ENCODE measurements at regions of chr7 and their contacts with region 1.

Region 1: DNA sequence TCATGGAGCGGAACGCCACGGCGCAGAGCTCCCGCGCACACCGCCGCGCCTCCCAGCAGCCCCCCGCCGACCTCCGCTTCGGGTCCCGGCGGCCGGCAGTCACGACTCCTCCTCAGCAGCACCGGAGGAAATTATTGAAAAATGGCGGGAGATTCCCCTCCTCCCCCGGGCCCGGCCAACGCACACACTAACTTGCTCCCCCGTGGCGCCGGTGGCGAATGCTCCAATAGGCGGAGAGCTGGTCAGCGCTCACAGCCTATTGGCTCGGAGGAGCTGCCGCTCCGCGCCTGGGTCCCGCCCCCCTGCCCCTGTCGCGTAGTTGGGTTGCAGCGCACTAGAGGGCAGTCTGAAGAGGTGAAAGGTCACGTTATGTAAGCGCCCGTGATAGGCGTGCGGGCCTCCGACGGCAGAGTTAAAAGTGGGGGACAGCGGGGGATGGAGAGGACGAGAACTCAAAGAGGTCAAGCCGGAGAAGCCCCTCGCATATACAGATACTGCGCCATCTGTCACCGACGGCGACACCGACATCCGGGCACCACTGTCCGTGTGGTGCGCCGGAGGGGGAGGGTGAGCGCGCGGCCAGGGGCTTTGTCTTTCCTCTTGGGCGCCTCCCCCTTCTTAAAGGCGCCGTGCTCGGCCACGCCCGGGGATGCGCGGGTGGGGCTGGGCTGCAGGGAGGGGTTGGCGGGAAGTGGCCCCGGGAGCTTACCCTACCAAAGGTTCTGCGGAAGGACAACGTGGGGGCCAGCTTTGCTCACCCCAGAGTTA is at the start of gene BAZ1B:
- DNase-seq: peak; percentile 92 to 98 (median 94)
- H3K4me3 ChIP-seq: peak within 1 kb of the TSS; percentile 88
- H3K4me3 Mint-ChIP-seq: peak within 1 kb of the TSS; percentile 93 to 100 (median 99)
- H3K27ac ChIP-seq: peak within 1 kb of the TSS; percentile 87
- H3K27ac Mint-ChIP-seq: peak within 1 kb of the TSS; percentile 97 to 100 (median 99)
- H3K4me1 ChIP-seq: peaks cover 57% of the 10 kb centered on the region
- H3K4me1 Mint-ChIP-seq: peaks cover 64 to 71% (median 71%) of the 10 kb centered on the region in 3 donors
- H3K27me3 ChIP-seq: no peaks in the 10 kb centered on the region
- H3K27me3 Mint-ChIP-seq: peaks cover 0 to 3% of the 10 kb centered on the region in 2 donors
- total RNA-seq, gene BAZ1B: 112 to 118 TPM

Region 2: GRCh38 chr7:73557108-73557396 is 34.8 kb after region 1 on chr7:
- CTCF ChIA-PET with region 1: interaction called, 29 read pairs
- POLR2A ChIA-PET with region 1: interaction called, 62 read pairs
- DNase-seq: peak; percentile 90 to 93 (median 92)
- H3K4me3 ChIP-seq: peak overlapping the region; percentile 81
- H3K4me3 Mint-ChIP-seq: peak overlapping the region; percentile 86 to 93 (median 92)
- H3K27ac ChIP-seq: peak overlapping the region; percentile 94
- H3K27ac Mint-ChIP-seq: peak overlapping the region; percentile 86 to 96 (median 94)
- H3K4me1 ChIP-seq: peaks cover 25% of the 10 kb centered on the region
- H3K4me1 Mint-ChIP-seq: peaks cover 23 to 44% (median 32%) of the 10 kb centered on the region in 3 donors
- H3K27me3 ChIP-seq: no peaks in the 10 kb centered on the region
- H3K27me3 Mint-ChIP-seq: peaks cover 0 to 3% of the 10 kb centered on the region in 2 donors

Region 3: GRCh38 chr7:73565675-73566340 is 43.5 kb after region 1 on chr7:
- CTCF ChIA-PET with region 1: no interaction called
- POLR2A ChIA-PET with region 1: interaction called, 10 read pairs
- DNase-seq: no peak
- H3K4me3 ChIP-seq: peak overlapping the region; percentile 45
- H3K4me3 Mint-ChIP-seq: peak overlapping the region; percentile 68 to 92 (median 86)
- H3K27ac ChIP-seq: no peak overlapping the region
- H3K27ac Mint-ChIP-seq: peak overlapping the region; percentile 37 to 89 (median 72)
- H3K4me1 ChIP-seq: peaks cover 18% of the 10 kb centered on the region
- H3K4me1 Mint-ChIP-seq: peaks cover 17 to 24% (median 19%) of the 10 kb centered on the region in 3 donors
- H3K27me3 ChIP-seq: no peaks in the 10 kb centered on the region
- H3K27me3 Mint-ChIP-seq: peaks cover 0 to 1% of the 10 kb centered on the region in 2 donors